ENCODE measurements at regions of chr7 and their contacts with region 1.

Region 1: GRCh38 chr7:40990841-40991240 is 712.0 kb downstream of the INHBA start:
- DNase-seq: no peak
- H3K4me3 ChIP-seq: no peak overlapping the region
- H3K27ac ChIP-seq: no peak overlapping the region
- H3K27me3 ChIP-seq: no peaks in the 10 kb centered on the region
- CTCF ChIP-seq: no peak

Region 2: DNA sequence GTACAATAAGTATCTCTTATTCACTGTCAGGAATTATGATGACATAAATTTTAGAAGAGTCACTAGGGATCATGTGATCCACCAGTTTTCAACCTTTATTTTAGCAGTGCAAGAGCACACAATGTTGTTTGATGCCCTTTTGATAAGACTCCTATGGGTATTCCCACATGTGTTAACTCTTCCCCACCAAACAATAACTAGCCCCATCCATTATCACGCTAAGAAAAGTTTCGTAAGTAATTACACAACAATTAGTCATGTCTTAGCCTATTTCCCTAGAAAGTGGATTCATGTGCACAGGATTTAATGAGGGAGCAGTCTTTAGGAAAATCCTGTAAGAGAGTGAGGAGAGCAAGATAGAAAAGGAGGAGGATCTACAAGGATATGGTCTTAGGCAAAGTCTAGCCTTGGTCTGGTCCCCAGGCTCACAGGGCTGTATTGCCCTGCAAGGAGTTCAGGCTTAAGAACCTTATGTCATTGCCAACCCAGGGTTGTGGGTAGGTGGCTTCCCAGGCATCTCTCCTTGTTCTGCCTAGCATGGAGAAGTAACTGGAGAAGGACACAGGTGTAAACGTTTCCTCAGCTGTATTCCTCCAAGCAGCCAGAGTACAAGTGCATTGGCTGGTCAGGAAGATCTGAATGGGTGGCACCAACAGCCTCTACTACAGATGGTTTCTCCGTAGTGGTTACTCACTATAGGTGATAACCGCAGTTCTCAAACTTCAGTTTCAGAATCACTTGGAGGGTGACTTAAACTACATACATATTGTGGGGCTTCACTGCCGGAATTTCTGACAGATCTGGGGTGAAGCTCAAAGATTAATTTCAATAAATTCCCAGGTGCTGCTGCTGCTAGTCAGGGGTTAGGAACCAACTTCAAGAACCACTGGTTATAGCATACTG is 281.5 kb before region 1 on chr7:
- CTCF ChIA-PET with region 1: no interaction called
- POLR2A ChIA-PET with region 1: no interaction called
- DNase-seq: no peak
- H3K4me3 ChIP-seq: no peak overlapping the region
- H3K27ac ChIP-seq: no peak overlapping the region
- H3K27me3 ChIP-seq: no peaks in the 10 kb centered on the region
- CTCF ChIP-seq: no peak

Region 3: GRCh38 chr7:41003031-41003925 is 12.4 kb after region 1 on chr7:
- CTCF ChIA-PET with region 1: interaction called, 11 read pairs
- POLR2A ChIA-PET with region 1: no interaction called
- DNase-seq: no peak
- H3K4me3 ChIP-seq: no peak overlapping the region
- H3K27ac ChIP-seq: no peak overlapping the region
- H3K27me3 ChIP-seq: no peaks in the 10 kb centered on the region
- CTCF ChIP-seq: peak; percentile 72

Region 4: DNA sequence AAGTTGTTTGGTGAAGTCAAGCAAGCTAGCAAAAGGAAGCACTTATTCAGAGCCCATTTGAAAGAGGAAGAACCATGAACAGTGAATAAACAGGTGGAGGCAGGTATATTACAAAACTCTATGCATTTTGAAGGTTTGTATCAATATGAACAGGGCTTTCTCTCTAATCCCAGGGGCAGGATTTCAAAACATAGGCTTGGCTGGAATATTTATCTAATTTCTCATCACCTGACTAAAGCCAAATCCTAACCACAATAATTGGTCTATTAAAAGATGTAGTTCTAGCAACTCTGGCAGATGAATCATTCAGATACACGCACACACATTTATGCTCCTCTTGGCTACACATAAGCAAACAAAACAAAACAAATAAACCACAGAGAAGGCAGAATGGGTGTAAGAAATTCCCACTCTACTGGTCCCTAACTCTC is 157.7 kb after region 1 on chr7:
- CTCF ChIA-PET with region 1: no interaction called
- POLR2A ChIA-PET with region 1: no interaction called
- DNase-seq: peak; percentile 36
- H3K4me3 ChIP-seq: no peak overlapping the region
- H3K27ac ChIP-seq: no peak overlapping the region
- H3K27me3 ChIP-seq: no peaks in the 10 kb centered on the region
- CTCF ChIP-seq: no peak